Activated T-helper 2 cell treated with anti-CD3 and anti-CD28 coated beads, Interferon-gamma antibody, Interleukin-2, Interleukin-4, amounts not matched to agents 10 μg/mL and 5 μg/mL and 100 μg/mL, durations not matched to agents 14 hours and 24 hours and 36 hours (primary cell): ENCODE measurements at regions of chr21 and their contacts with region 1.

Region 1: DNA sequence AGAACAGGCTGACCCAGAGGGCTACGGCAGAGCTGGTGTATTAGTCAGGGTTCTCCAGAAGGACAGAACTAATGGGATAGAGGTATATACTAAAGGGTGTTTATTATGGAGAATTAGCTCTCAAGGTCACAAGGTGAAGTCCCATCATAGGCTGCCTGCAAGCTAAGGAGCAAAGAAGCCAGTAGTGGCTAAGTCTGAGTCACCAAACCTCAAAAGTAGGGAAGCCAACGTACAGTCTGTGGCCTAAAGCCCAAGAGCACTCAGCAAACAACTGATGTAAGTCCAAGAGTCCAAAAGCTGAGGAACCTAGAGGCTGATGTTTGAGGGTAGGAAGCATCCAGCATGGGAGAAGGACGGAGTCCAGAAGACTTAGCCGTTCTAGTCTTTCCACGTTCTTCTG is 179.2 kb downstream of the BACH1 start:
- DNase-seq: no peak
- H3K4me3 Mint-ChIP-seq: no peak overlapping the region
- H3K27ac Mint-ChIP-seq: no peak overlapping the region
- H3K4me1 Mint-ChIP-seq: peaks cover 5% of the 10 kb centered on the region
- H3K27me3 Mint-ChIP-seq: no peaks in the 10 kb centered on the region

Region 2: DNA sequence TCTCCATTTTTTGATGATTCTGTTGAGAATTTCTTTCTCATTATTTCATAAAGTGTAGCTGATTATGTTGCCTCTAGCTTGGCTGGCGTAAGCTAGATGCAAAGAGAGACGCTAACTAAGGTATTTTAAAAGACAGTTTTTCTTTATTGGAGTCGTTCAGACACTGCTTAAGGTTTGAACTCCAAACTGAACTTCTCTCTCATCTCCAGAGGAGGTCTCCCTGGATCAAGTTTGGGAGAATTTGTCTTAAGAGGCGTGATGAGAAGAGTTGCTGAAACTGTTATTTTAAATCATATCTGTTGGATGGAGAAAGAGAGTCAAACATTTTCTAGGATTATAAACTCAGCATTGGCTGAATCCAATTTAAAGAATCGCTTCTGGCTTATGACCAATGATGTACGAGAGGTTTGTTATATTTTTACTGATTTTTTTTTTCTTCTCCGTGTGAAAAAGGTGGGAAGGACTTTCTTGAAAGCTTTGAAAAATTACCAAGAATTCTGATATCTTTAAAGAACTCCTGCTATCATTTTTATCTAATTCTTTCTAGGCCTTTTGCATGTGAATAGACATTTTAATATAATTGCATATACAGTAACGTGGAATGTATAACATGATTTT is 313.5 kb before region 1 on chr21:
- intact Hi-C with region 1: no loop called
- DNase-seq: no peak
- H3K4me3 Mint-ChIP-seq: no peak overlapping the region
- H3K27ac Mint-ChIP-seq: no peak overlapping the region
- H3K4me1 Mint-ChIP-seq: peaks cover 3% of the 10 kb centered on the region
- H3K27me3 Mint-ChIP-seq: peaks cover 7% of the 10 kb centered on the region

Region 3: GRCh38 chr21:29423099-29423498 is 54.8 kb before region 1 on chr21:
- intact Hi-C with region 1: no loop called
- DNase-seq: no peak
- H3K4me3 Mint-ChIP-seq: no peak overlapping the region
- H3K27ac Mint-ChIP-seq: no peak overlapping the region
- H3K4me1 Mint-ChIP-seq: no peaks in the 10 kb centered on the region
- H3K27me3 Mint-ChIP-seq: no peaks in the 10 kb centered on the region

Region 4: DNA sequence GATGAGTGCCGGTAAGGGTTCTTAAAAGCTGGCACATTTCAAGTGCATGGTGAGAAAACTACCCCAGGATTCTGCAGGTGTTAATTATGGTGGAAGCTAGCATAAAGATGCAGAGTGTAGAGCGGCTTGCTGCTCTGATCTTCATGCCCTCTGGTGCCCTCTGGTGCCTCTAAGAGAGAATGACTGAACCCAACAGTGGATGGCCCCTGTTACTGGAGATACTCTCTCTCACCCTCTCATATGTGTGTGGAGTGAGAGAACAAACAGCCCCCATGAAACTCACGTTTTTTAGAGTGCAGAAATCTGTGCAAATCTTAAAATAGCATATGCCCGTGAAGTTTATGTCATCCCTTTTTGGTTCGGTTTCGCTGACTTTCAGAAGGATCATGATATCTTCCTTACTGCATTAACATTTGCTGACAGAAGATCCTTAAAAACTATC is 371.8 kb after region 1 on chr21:
- intact Hi-C with region 1: loop called (anchors 1 kb)
- DNase-seq: peak; percentile 18
- H3K4me3 Mint-ChIP-seq: no peak overlapping the region
- H3K27ac Mint-ChIP-seq: no peak overlapping the region
- H3K4me1 Mint-ChIP-seq: no peaks in the 10 kb centered on the region
- H3K27me3 Mint-ChIP-seq: peaks cover 3% of the 10 kb centered on the region